ENCODE measurements at regions of chr3 and their contacts with region 1.

Region 1: DNA sequence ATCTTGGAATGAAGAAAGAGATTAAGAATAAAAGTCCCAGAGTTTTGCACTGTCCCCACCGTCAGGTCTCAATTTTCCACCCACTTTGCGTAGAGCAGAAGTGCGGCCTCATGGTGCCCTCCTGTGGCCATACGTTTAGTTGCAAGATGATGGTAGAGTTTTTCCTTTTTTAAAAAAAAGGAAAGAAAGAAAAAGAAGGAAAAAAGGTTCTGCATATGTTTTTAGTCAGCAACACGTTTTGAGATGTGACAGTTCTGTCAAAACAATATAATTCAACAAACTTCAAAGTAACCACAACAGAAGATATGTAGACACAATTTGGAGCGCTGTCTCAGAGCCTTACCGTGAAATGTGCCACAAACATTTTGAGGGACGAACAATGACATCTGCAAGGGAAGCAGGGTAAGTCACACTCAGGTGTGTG is 24.6 kb downstream of the EBLN2 start:
- DNase-seq: peak in 8 of 10 donors; percentile 44 to 89 (median 60)

Region 2: DNA sequence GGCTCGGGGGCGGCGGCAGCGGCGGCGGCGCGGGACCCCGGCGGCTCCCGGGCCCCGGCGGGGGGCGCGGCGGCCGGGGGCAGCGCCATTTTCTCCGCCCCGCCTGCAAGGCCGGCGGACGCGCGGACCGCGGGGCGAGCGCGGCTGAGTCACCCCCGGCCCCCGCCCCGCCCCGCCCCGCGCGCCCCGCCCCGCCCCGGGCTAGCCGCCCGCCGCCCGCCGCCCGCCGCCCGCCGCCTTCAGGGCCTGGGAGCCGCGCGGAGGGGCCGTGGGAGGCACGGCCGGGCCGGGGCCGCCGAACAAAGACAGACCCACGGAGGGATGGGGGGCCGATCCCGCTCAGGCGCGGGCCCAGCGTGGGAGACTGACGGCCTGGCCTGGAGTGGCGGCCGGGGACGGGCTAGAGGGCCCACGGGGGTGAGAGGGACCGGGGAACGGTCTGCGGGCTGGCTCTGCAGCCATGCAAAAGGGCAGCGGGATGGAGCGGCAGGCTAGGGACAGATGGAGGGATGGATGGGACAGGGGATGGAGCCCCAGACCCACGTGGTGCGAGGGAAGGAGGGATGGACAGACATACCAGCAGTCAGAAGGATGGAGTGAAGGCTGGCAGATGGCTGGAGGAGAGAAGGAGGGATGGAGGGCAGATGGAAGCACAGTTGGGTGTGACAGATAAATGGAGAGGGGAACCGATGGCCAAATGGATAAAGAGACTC is 1360.6 kb before region 1 on chr3 and contains the start of gene EIF4E3:
- intact Hi-C with region 1: loop called (anchors 10 kb)
- DNase-seq: peak in 8 of 10 donors; percentile 17 to 89 (median 46)

Region 3: GRCh38 chr3:72847751-72848702 is 238.1 kb before region 1 on chr3 and contains the start of gene SHQ1:
- intact Hi-C with region 1: loop called (anchors 5 kb)
- DNase-seq: peak; percentile 86 to 99 (median 94)

Region 4: GRCh38 chr3:73314151-73314951 is 228.3 kb after region 1 on chr3:
- intact Hi-C with region 1: no loop called
- DNase-seq: no peak

Region 5: GRCh38 chr3:73409118-73409763 is 323.2 kb after region 1 on chr3:
- intact Hi-C with region 1: no loop called
- DNase-seq: no peak

Measured in posterior cingulate gyrus (tissue), 11 donors.